ENCODE measurements at regions of chr4 and their contacts with region 1.

Region 1: DNA sequence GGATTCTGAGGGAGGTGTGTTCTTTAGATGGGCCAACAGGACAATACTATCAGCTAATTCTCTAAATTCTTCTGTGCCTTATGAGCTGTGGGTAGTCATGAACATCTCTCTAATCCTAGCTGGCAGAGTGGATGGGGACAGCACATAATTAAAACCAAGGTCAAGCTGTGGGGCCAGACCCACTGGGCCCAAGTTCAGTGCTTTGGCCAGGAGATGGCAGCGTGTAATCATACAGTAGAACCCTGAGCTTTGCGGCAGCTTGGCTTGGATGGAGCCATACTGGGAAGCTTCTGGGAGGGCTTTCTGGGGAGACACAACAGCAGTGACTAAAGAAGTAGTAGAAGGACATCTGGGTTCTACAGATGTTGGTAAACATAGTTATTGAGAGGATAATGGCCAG is 140.3 kb upstream of the CXCL13 start:
- DNase-seq: peak; percentile 45
- H3K4me3 Mint-ChIP-seq: no peak overlapping the region
- H3K27ac Mint-ChIP-seq: no peak overlapping the region
- H3K4me1 Mint-ChIP-seq: no peaks in the 10 kb centered on the region
- H3K27me3 Mint-ChIP-seq: no peaks in the 10 kb centered on the region
- CTCF ChIP-seq: peak; percentile 61

Region 2: GRCh38 chr4:77593993-77594392 is 128.7 kb after region 1 on chr4:
- CTCF ChIA-PET with region 1: interaction called, 143 read pairs
- POLR2A ChIA-PET with region 1: no interaction called
- intact Hi-C with region 1: no loop called
- DNase-seq: no peak
- H3K4me3 Mint-ChIP-seq: no peak overlapping the region
- H3K27ac Mint-ChIP-seq: peak overlapping the region; percentile 44
- H3K4me1 Mint-ChIP-seq: no peaks in the 10 kb centered on the region
- H3K27me3 Mint-ChIP-seq: no peaks in the 10 kb centered on the region
- CTCF ChIP-seq: no peak

Region 3: DNA sequence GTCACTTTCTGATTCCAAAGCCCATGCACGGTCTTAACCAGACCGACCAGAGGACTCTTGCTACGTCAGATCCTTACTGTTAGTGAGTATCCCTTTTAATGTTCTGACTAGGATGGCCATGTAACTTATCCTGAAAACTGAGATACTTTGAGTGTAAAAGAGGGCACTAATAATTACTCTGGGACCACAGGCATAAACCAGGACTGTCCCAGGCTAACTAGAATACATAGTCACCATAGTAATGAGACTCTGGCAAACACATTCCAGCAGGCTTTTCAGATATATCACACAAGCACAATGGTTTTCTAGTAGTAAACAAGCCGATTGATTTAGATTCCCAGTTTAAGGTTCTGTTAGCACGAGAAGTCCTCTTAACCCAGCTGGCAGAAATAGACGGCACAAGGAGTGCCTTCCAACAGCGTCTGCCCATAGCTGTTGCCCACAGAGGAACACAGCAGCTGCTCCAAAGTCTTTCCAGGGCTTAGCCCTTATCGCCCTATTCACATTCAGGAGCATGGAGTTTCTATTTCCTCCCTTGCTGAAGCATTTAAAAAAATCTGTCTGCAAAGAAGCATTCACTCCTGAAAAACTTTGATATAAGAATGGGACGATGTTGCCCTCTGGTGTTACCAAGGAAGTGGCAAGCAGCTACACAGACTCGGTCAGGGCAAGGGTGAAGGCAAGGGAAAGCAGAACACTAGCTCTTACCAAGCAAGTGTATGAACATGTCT is 232.8 kb after region 1 on chr4:
- CTCF ChIA-PET with region 1: interaction called, 15 read pairs
- POLR2A ChIA-PET with region 1: interaction called, 3 read pairs
- intact Hi-C with region 1: loop called (anchors 1 kb)
- DNase-seq: peak; percentile 73
- H3K4me3 Mint-ChIP-seq: no peak overlapping the region
- H3K27ac Mint-ChIP-seq: no peak overlapping the region
- H3K4me1 Mint-ChIP-seq: peaks cover 23% of the 10 kb centered on the region
- H3K27me3 Mint-ChIP-seq: no peaks in the 10 kb centered on the region
- CTCF ChIP-seq: peak; percentile 65

Measured in MCF 10A (cell line).